Sciatic nerve (tissue), 2 donors: ENCODE measurements at regions of chr19 and their contacts with region 1.

Region 1: GRCh38 chr19:36114763-36115452 is at the start of gene POLR2I:
- DNase-seq: peak; percentile 99
- ATAC-seq: peak; percentile 98
- total RNA-seq, gene POLR2I: 60.5 TPM

Region 2: GRCh38 chr19:34963573-34964409 is 1151.1 kb before region 1 on chr19 and contains the start of gene ZNF792:
- intact Hi-C with region 1: no loop called
- DNase-seq: peak; percentile 80
- ATAC-seq: peak; percentile 86
- total RNA-seq, gene ZNF792: 9.0 TPM

Region 3: GRCh38 chr19:36060430-36060829 is 54.5 kb before region 1 on chr19:
- intact Hi-C with region 1: loop called (anchors 10 kb)
- DNase-seq: peak; percentile 81
- ATAC-seq: peak; percentile 91

Region 4: DNA sequence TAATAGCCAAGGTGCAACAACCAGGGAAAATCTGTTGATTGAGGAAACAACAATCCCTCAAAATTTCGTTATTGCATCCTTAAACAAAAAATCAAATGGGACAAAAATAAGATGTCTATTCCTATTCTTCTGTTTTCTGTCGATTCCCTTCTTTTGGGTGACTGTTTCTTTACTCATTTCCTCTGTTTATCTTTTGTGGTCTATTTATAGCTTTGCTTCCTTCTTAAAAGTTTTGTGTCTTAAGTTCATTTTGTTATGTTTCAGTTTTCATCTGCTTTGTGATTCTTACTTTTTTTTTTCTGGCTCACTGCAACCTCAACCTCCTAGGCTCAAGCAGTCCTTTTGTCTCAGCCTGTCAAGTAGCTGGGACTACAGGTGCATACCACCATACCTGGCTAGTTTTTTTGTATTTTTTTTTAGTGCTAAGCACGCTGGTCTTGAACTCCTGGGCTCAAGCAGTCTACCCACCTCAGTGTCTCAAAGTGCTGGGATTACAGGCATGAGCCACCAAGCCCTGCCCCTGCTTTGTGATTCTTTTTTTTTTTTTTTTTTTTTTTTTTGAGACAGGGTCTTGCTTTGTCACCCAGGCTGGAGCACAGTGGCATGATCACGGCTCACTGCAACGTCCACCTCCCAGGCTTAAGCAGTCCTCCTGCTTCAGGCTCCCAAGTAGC is 110.4 kb after region 1 on chr19:
- intact Hi-C with region 1: no loop called
- DNase-seq: no peak
- ATAC-seq: no peak